ENCODE measurements at regions of chr1 and their contacts with region 1.

Region 1: DNA sequence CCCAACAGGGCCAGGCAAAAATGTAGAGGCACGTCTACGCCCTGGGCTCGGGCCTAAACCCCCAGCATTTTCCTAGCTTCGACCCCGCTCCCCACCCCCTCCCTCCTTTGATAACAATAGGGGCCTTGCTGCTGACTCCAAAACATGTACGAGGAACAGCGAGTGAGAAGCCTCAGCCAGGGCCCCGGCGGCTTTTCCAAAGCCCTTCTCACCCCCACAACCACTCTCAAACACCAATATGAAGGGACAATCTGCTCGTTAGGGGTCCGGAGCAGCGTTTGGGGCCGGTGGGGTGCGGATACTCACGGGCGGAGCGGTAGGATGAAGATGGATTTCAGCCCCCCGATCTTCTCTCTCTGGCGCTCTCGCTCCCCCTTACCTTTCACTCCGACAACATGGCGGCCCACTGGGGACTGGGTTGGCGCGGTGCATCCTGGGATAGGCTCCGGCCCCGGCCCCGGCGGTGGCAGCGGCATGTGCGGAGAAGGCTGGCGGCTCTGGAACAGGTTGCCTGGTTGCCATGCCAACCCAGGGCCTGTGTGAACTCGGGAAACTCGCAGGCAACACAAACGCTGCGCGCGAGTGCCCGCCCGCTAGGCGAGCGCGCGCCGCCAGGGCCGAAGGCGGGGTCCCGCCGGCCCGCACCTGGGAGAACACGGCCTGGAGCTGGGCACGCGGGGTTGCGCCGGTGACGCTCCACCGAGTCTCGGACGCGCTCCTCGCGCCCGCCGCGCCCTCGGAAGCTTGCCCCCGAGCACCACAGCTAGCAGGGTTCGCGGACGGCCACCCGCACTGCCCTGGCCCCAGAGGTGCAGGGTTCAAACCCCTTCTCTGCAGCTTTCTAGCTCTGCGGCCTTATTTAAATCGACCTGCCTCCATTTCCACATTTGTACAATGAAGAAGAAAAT is at the start of gene PUM1:
- DNase-seq: peak; percentile 95 to 99
- H3K4me3 ChIP-seq: peak within 1 kb of the TSS; percentile 60 to 74
- H3K27ac ChIP-seq: peak within 1 kb of the TSS; percentile 78 to 91
- H3K4me1 ChIP-seq: peaks cover 0 to 21% of the 10 kb centered on the region in 2 donors
- H3K27me3 ChIP-seq: no peaks in the 10 kb centered on the region
- CTCF ChIP-seq: peak in 1 of 3 experiments; percentile 21
- total RNA-seq, gene PUM1: 52.3 TPM

Region 2: GRCh38 chr1:30511991-30512913 is 553.3 kb before region 1 on chr1:
- intact Hi-C with region 1: no loop called
- DNase-seq: no peak
- H3K4me3 ChIP-seq: no peak overlapping the region
- H3K27ac ChIP-seq: no peak overlapping the region
- H3K4me1 ChIP-seq: no peaks in the 10 kb centered on the region
- H3K27me3 ChIP-seq: no peaks in the 10 kb centered on the region
- CTCF ChIP-seq: no peak

Region 3: DNA sequence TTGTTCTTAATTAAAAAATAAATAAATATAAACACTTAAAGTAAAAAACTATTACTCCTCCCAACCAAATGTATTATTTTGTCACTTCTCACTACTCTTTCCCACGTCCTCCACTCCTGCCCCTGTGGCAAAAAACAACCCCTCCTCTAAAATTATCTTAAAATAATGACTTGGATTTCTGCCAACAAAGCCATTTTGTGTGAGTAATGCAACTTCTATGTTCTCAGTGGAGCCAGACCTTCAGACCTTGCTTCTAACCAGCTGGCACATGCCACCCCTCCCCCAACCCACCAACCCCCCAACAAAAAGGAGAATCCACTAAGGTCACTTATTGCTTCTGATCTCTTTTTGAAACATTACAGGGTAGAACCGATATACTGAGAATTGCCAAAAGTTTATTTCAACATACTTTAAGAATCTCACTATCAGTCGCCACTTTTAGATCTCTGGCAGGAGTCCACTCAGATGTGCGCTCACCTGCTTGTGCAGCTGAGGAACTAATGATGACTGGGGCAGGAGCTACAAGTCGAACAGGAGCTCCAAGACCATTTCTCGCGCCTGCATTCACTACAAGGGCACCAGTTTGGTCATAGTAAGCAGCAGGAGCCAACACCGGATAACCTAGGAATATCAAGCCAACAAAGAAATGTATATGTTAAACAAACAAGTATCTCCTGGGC is 98.7 kb before region 1 on chr1:
- intact Hi-C with region 1: loop called (anchors 5 kb)
- DNase-seq: no peak
- H3K4me3 ChIP-seq: no peak overlapping the region
- H3K27ac ChIP-seq: peak overlapping the region in 1 of 2 donors; percentile 45
- H3K4me1 ChIP-seq: peaks cover 12 to 23% of the 10 kb centered on the region in 2 donors
- H3K27me3 ChIP-seq: no peaks in the 10 kb centered on the region
- CTCF ChIP-seq: no peak

Region 4: GRCh38 chr1:31155216-31155841 is 89.8 kb after region 1 on chr1:
- intact Hi-C with region 1: loop called (anchors 1 kb)
- DNase-seq: peak in 1 of 2 donors; percentile 72
- H3K4me3 ChIP-seq: peak overlapping the region; percentile 52 to 90
- H3K27ac ChIP-seq: peak overlapping the region; percentile 82 to 88
- H3K4me1 ChIP-seq: peaks cover 0 to 7% of the 10 kb centered on the region in 2 donors
- H3K27me3 ChIP-seq: no peaks in the 10 kb centered on the region
- CTCF ChIP-seq: peak in 2 of 3 experiments; percentile 29 to 35